Activated naive CD4-positive, alpha-beta T cell treated with anti-CD3 and anti-CD28 coated beads for 36 hours (primary cell): ENCODE measurements at regions of chr4 and their contacts with region 1.

Region 1: DNA sequence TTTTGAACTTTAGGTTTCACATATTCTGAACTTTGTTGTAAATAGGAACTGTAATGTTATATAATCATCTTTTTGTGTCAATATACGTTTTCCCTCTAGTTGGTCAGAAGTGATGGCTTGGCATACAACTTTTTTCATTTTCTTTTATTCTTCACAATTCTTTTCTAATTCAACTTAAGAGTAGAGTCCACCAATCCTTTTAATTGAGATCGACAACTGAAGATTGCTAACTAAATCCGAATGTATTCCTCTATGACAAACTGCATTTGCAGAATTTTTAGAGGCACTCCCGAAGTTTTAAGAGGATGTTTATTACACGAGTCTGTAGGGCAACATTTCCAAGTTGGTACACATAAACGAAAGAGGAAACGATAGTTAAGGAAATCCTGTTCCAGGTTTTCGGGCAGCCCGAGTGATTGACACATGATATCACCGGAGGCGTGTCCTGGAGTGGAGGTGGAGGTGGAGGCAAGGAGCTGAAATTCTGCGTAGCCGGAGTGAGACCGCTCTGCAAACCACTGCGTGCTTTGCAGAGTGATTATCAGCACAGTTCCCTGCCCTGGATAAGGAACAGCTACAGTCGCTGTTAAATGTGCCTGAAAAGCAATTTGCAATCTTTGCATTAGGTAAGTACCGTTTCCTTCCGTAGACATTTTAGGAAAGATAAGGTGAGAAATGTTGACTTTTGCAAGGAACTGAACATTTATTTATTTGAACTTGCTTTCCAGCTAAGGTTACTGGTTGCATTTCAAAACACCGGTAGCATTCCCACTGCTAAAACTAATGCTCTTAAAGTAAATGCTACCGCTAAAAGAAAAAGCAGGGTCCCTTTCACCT is at the start of gene SPRY1:
- DNase-seq: peak; percentile 88
- H3K4me3 Mint-ChIP-seq: peak within 1 kb of the TSS; percentile 87
- H3K27ac Mint-ChIP-seq: peak within 1 kb of the TSS; percentile 83
- H3K4me1 Mint-ChIP-seq: peaks cover 18% of the 10 kb centered on the region
- H3K27me3 Mint-ChIP-seq: peaks cover 15% of the 10 kb centered on the region
- total RNA-seq, gene SPRY1: 16.9 to 20.3 TPM

Region 2: DNA sequence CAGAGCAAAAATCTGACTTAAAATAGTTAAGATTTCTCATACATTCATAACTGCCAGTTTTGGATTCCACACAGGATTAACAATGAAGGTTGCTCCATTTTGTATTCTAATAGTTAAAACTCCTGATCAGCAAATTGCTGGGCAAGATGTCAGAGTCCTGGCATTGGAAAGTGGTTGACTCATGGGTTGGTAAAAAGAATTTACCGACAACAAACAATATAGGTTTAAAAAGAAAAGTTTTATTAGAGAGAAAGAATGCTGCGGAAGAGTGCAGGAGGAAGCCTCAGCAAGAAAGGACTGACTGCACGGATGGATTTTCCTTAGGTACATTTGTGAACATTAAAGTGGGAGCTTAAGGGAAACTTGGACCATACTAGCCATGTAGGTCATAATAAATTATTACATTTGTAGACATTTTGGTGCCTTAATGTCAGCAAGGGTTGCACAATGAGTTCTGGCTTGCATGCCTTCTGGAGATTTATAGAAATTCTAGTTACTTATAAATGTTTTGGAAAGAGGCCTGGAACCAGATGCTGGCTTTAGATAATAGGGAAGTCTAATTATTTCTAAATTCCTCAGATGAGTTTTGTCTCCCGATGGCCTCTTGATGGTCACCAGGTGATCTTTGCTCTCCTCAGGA is 914.6 kb before region 1 on chr4:
- CTCF ChIA-PET with region 1: no interaction called
- intact Hi-C with region 1: no loop called
- DNase-seq: no peak
- H3K4me3 Mint-ChIP-seq: no peak overlapping the region
- H3K27ac Mint-ChIP-seq: no peak overlapping the region
- H3K4me1 Mint-ChIP-seq: peaks cover 21% of the 10 kb centered on the region
- H3K27me3 Mint-ChIP-seq: no peaks in the 10 kb centered on the region

Region 3: DNA sequence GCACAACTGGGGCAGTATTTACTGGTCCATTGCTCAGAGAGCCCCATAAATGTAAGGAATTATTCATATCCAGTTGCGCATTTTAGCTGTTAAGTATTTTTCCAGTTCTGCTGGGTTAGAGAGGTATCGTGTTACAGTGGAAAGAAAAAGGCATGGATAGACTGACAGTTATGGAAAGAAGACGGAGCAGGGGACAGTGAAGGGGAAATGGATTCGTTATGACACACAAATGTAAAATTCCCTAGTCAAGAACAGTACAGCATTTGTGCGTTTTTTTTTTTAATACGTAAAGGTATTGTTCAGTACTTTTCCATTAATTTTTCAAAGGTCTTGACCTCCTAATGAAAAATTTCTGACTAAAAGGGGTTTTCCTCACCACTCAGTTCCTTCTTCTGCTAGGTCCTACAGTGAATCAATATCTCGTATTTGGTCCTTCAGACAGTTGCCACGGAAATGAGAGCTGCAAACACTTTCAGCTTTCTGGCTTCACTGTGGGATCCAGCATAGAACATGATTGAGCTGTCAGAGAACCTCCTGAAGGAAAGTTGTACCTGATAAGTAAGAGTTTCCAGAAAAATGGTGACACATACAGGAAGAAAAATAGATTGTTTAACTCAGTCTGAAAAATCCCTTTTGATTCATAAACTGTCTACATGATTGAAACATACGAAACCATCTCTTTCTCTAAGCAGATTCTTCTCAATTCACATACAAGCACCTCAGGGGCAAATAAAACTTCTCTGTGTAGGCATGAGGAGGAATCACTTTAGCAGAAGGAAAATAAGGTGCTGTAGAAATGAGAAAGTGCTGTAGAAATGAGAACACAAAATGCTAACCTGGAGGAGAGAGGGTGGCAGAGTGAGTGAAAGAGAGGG is 685.9 kb before region 1 on chr4:
- CTCF ChIA-PET with region 1: no interaction called
- intact Hi-C with region 1: loop called (anchors 5 kb)
- DNase-seq: peak; percentile 79
- H3K4me3 Mint-ChIP-seq: peak overlapping the region; percentile 54
- H3K27ac Mint-ChIP-seq: peak overlapping the region; percentile 96
- H3K4me1 Mint-ChIP-seq: peaks cover 80% of the 10 kb centered on the region
- H3K27me3 Mint-ChIP-seq: no peaks in the 10 kb centered on the region

Region 4: DNA sequence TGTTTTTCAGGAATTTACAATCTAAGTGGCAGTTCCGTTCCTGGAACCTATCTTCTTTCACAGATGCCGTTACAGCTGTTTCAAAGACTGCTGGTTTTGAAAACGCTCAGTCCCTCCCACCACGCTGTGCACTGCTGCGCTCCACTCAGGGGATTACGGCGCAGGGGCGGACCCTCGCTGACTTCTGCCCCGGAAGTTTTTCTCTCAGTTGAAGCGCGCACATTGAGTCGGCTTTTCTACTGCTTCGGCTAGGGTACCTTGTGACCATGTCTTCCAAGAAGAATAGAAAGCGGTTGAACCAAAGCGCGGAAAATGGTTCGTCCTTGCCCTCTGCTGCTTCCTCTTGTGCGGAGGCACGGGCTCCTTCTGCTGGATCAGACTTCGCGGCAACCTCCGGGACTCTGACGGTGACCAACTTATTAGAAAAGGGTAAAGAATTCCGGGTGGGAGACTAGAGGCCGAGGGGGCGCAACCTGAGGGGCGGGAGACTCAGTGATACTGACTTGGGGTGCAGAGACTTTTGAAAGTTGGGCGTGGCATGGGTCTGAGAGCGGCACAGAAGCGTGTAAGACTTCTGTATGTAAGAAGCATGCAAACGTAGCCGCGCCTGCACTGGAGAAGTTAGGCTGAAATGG is 473.5 kb before region 1 on chr4:
- CTCF ChIA-PET with region 1: no interaction called
- intact Hi-C with region 1: loop called (anchors 2 kb)
- DNase-seq: peak; percentile 94
- H3K4me3 Mint-ChIP-seq: peak overlapping the region; percentile 99
- H3K27ac Mint-ChIP-seq: peak overlapping the region; percentile 87
- H3K4me1 Mint-ChIP-seq: peaks cover 11% of the 10 kb centered on the region
- H3K27me3 Mint-ChIP-seq: peaks cover 2% of the 10 kb centered on the region

Region 5: GRCh38 chr4:123350191-123350544 is 46.4 kb before region 1 on chr4:
- CTCF ChIA-PET with region 1: no interaction called
- intact Hi-C with region 1: no loop called
- DNase-seq: peak; percentile 20
- H3K4me3 Mint-ChIP-seq: no peak overlapping the region
- H3K27ac Mint-ChIP-seq: no peak overlapping the region
- H3K4me1 Mint-ChIP-seq: peaks cover 2% of the 10 kb centered on the region
- H3K27me3 Mint-ChIP-seq: peaks cover 7% of the 10 kb centered on the region

Region 6: DNA sequence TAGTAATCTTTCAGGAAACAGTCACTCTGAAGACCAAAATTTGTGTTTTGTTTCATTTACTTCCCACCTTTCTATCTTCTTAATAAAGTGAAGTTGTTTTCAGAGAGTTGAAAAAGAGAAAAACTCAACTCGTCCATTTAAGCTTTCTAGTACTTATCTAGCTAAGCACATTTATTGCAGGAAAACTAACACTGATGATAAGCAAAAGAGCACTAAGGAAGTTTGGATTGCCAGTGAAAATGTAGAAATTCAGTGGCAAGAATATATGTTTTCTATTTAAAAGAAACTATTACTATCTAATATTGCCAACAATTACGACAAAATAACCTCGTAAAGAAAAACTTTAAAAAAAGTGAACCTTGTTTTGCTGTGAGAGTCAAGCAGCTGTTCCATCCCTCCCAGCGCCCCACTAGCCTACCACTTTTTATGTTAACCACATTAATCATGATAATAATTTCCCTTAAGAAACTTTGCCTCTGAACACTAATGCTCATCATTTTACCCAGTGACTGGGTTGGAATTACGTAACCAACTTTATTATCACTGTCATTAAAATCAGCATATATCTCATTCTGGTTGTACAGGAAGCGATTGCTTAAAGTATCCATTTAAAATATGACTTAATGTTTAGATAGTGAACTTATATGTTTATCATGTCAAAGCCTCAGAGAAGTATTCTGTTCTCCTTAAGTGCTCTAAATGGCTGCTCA is 24.9 kb after region 1 on chr4:
- CTCF ChIA-PET with region 1: interaction called, 5 read pairs
- intact Hi-C with region 1: loop called (anchors 1 kb)
- DNase-seq: no peak
- H3K4me3 Mint-ChIP-seq: peak overlapping the region; percentile 9
- H3K27ac Mint-ChIP-seq: peak overlapping the region; percentile 91
- H3K4me1 Mint-ChIP-seq: peaks cover 39% of the 10 kb centered on the region
- H3K27me3 Mint-ChIP-seq: no peaks in the 10 kb centered on the region

Region 7: DNA sequence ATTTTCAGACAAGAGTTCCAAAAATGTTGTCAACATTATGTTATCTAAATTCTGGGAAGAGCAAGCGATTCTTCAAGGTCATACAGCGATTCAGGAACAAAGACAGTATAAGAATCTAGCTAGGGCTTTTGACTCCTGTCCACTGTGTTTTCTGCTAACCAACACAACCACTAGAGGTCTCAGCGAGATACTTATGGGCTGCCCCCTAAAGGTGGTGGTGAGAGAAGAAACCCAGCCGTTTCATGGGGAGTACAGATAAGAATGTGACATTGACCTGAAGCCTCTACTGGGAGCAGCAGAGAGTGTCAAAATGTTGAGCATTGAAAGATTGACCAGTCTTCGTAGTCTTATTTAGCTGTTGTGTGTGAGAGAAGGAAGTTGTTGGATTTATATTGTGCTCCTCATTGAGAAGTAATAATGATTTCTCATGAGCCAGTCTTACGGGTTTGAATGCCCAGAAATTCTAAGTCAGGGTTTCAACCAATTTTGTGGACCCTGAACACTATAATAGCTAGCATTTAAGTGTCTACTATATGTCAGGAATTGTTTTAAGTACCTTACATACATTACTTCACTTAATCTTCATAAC is 168.3 kb after region 1 on chr4:
- CTCF ChIA-PET with region 1: interaction called, 7 read pairs
- intact Hi-C with region 1: loop called (anchors 2 kb)
- DNase-seq: peak; percentile 65
- H3K4me3 Mint-ChIP-seq: no peak overlapping the region
- H3K27ac Mint-ChIP-seq: no peak overlapping the region
- H3K4me1 Mint-ChIP-seq: no peaks in the 10 kb centered on the region
- H3K27me3 Mint-ChIP-seq: no peaks in the 10 kb centered on the region

Region 8: DNA sequence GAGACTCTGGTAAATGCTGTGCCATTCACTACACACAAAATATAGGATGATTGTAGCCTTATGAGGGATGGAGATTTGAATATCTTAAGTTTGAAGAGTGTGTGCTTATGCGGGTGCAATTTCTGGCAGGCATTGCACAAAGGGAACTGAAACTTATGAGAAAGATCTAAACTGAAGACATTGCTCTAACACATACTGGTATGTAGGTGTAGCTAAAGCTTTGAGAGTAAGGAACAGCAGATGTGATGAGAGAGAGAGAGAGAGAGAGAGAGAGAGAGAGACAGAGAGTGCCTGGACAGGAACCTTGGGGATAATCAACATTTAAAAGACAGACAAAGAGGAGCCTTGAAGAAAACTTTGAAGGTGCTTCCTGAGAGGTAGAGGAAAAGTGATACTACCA is 379.7 kb after region 1 on chr4:
- CTCF ChIA-PET with region 1: no interaction called
- intact Hi-C with region 1: loop called (anchors 10 kb)
- DNase-seq: no peak
- H3K4me3 Mint-ChIP-seq: no peak overlapping the region
- H3K27ac Mint-ChIP-seq: no peak overlapping the region
- H3K4me1 Mint-ChIP-seq: peaks cover 6% of the 10 kb centered on the region
- H3K27me3 Mint-ChIP-seq: peaks cover 7% of the 10 kb centered on the region